MCF 10A (cell line): ENCODE measurements at regions of chr1 and their contacts with region 1.

Region 1: GRCh38 chr1:203216274-203217138 is 13.0 kb downstream of the CHIT1 start:
- DNase-seq: peak; percentile 89
- H3K4me3 Mint-ChIP-seq: no peak overlapping the region
- H3K27ac Mint-ChIP-seq: no peak overlapping the region
- H3K4me1 Mint-ChIP-seq: no peaks in the 10 kb centered on the region
- H3K27me3 Mint-ChIP-seq: peaks cover 33% of the 10 kb centered on the region
- CTCF ChIP-seq: peak; percentile 93

Region 2: GRCh38 chr1:203117611-203118575 is 98.6 kb before region 1 on chr1:
- CTCF ChIA-PET with region 1: interaction called, 185 read pairs
- POLR2A ChIA-PET with region 1: interaction called, 6 read pairs
- intact Hi-C with region 1: loop called (anchors 1 kb)
- DNase-seq: peak; percentile 85
- H3K4me3 Mint-ChIP-seq: no peak overlapping the region
- H3K27ac Mint-ChIP-seq: no peak overlapping the region
- H3K4me1 Mint-ChIP-seq: peaks cover 10% of the 10 kb centered on the region
- H3K27me3 Mint-ChIP-seq: peaks cover 42% of the 10 kb centered on the region
- CTCF ChIP-seq: peak; percentile 99

Region 3: DNA sequence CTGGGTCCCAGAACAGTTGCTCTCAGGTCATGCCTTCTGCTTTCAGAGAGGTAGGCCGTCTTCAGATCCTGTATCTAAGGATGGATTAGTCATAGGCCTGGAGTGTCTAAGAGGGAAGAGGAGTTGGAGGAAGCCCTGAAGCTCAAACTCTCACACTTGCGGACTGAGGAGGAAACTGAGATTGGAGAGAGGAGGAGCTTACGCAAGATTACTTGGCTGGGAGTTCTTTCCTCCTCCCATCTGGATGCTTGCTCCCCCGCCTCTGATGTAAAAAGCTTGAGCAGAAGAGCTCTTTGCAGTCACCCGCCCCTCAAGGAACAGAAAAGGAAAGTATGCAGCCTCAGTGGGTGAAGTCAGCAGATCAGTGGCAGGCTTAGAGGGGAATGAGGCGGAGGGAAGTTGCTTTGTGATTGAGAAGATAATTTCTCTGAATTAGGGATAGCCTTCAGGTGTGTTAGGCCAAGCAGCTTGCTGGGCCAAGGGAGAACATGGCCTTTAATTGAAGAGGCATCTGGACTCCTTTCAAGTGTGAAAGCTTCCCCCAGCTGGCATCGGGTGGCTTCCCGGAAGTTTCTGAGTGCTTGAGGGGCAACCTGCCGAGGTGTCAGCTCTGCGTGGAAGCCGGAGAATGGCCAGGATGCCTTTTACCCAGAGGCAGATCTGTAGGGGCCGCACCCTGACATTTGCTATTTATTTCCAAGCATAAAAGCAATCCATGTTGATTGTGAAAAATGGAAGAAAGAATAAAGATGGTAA is 82.4 kb before region 1 on chr1:
- CTCF ChIA-PET with region 1: interaction called, 10 read pairs
- POLR2A ChIA-PET with region 1: no interaction called
- intact Hi-C with region 1: no loop called
- DNase-seq: peak; percentile 89
- H3K4me3 Mint-ChIP-seq: no peak overlapping the region
- H3K27ac Mint-ChIP-seq: no peak overlapping the region
- H3K4me1 Mint-ChIP-seq: peaks cover 17% of the 10 kb centered on the region
- H3K27me3 Mint-ChIP-seq: no peaks in the 10 kb centered on the region
- CTCF ChIP-seq: no peak

Region 4: DNA sequence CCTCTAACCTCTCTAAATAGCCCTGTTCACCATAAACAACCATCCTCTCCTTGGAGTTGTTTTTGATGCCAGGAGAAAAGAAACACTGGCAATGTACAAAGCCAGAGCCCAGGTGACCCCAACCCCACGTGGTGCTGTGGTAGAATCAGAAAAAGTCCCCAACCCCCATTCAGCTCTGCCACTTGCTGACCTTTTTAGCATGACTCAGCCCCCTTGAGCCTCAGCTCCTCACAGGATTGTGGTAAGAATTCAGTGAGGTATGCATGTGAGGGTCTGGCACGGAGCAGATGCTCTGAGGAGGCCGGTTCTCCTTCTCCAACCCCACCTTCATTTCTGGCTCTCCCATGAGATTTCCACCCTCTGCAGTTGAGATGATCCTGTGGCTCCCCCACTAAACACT is 18.9 kb before region 1 on chr1:
- CTCF ChIA-PET with region 1: interaction called, 69 read pairs
- POLR2A ChIA-PET with region 1: interaction called, 3 read pairs
- intact Hi-C with region 1: no loop called
- DNase-seq: peak; percentile 64
- H3K4me3 Mint-ChIP-seq: no peak overlapping the region
- H3K27ac Mint-ChIP-seq: no peak overlapping the region
- H3K4me1 Mint-ChIP-seq: peaks cover 16% of the 10 kb centered on the region
- H3K27me3 Mint-ChIP-seq: no peaks in the 10 kb centered on the region
- CTCF ChIP-seq: no peak

Region 5: GRCh38 chr1:203239526-203240305 is 23.2 kb after region 1 on chr1:
- CTCF ChIA-PET with region 1: interaction called, 15 read pairs
- POLR2A ChIA-PET with region 1: no interaction called
- intact Hi-C with region 1: no loop called
- DNase-seq: no peak
- H3K4me3 Mint-ChIP-seq: no peak overlapping the region
- H3K27ac Mint-ChIP-seq: no peak overlapping the region
- H3K4me1 Mint-ChIP-seq: no peaks in the 10 kb centered on the region
- H3K27me3 Mint-ChIP-seq: peaks cover 53% of the 10 kb centered on the region
- CTCF ChIP-seq: no peak